T-cell (primary cell): ENCODE measurements at regions of chr12 and their contacts with region 1.

Region 1: GRCh38 chr12:80269803-80270552 is 170.6 kb downstream of the OTOGL start:
- DNase-seq: peak in 1 of 35 experiments; percentile 43
- ATAC-seq: no peak
- H3K4me3 ChIP-seq: no peak overlapping the region
- H3K4me3 Mint-ChIP-seq: no peak overlapping the region
- H3K27ac ChIP-seq: no peak overlapping the region
- H3K27ac Mint-ChIP-seq: no peak overlapping the region
- H3K4me1 ChIP-seq: no peaks in the 10 kb centered on the region
- H3K4me1 Mint-ChIP-seq: no peaks in the 10 kb centered on the region
- H3K27me3 ChIP-seq: no peaks in the 10 kb centered on the region
- H3K27me3 Mint-ChIP-seq: peaks cover 7% of the 10 kb centered on the region in 2 donors

Region 2: GRCh38 chr12:79886917-79887519 is 383.0 kb before region 1 on chr12:
- CTCF ChIA-PET with region 1: interaction called, 3 to 15 read pairs
- POLR2A ChIA-PET with region 1: no interaction called
- DNase-seq: peak in 1 of 35 experiments; percentile 67
- ATAC-seq: peak; percentile 54 to 78 (median 72)
- H3K4me3 ChIP-seq: no peak overlapping the region
- H3K4me3 Mint-ChIP-seq: no peak overlapping the region
- H3K27ac ChIP-seq: no peak overlapping the region
- H3K27ac Mint-ChIP-seq: no peak overlapping the region
- H3K4me1 ChIP-seq: peaks cover 8 to 19% of the 10 kb centered on the region in 2 experiments
- H3K4me1 Mint-ChIP-seq: peaks cover 76 to 83% (median 81%) of the 10 kb centered on the region in 3 donors
- H3K27me3 ChIP-seq: no peaks in the 10 kb centered on the region
- H3K27me3 Mint-ChIP-seq: no peaks in the 10 kb centered on the region